Panc1 (cell line): ENCODE measurements at regions of chr7 and their contacts with region 1.

Region 1: GRCh38 chr7:96495751-96496216 is 173.9 kb upstream of the SLC25A13 start:
- DNase-seq: no peak
- ATAC-seq: no peak
- H3K4me3 ChIP-seq: no peak overlapping the region
- H3K27ac ChIP-seq: no peak overlapping the region
- H3K4me1 ChIP-seq: no peaks in the 10 kb centered on the region
- H3K27me3 ChIP-seq: no peaks in the 10 kb centered on the region; the same call in 1 of the 2 replicates
- CTCF ChIP-seq: no peak

Region 2: GRCh38 chr7:97081521-97082300 is 585.9 kb after region 1 on chr7:
- CTCF ChIA-PET with region 1: no interaction called
- POLR2A ChIA-PET with region 1: no interaction called
- in situ Hi-C with region 1: no loop called
- intact Hi-C with region 1: no loop called
- DNase-seq: no peak
- ATAC-seq: no peak
- H3K4me3 ChIP-seq: no peak overlapping the region
- H3K27ac ChIP-seq: no peak overlapping the region
- H3K4me1 ChIP-seq: no peaks in the 10 kb centered on the region
- H3K27me3 ChIP-seq: no peaks in the 10 kb centered on the region
- CTCF ChIP-seq: no peak

Region 3: DNA sequence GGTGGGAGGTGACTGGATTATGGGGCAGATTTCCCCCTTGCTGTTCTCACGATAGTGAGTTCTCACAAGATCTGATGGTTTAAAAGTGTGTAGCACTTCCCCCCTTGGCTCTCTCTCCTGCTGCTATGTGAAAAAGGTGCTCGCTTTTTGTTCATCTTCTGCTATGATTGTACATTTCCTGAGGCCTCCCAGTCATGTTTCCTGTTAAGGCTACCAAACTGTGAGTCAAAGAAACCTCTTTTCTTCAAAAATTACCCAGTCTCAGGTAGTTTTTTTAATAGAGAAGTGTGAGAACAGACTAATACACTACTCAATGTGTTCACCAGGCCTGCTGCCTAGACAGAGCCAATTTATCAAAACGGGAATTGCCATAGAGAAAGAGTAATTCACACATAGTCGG is 671.4 kb after region 1 on chr7:
- CTCF ChIA-PET with region 1: no interaction called
- POLR2A ChIA-PET with region 1: interaction called, 18 read pairs
- in situ Hi-C with region 1: no loop called
- intact Hi-C with region 1: no loop called
- DNase-seq: no peak
- ATAC-seq: no peak
- H3K4me3 ChIP-seq: no peak overlapping the region
- H3K27ac ChIP-seq: no peak overlapping the region
- H3K4me1 ChIP-seq: no peaks in the 10 kb centered on the region
- H3K27me3 ChIP-seq: no peaks in the 10 kb centered on the region
- CTCF ChIP-seq: no peak